Aorta (tissue), 5 donors: ENCODE measurements at regions of chr14 and their contacts with region 1.

Region 1: GRCh38 chr14:59576332-59577294 is at the start of gene CCDC175:
- DNase-seq: peak; percentile 91 to 92
- ATAC-seq: peak; percentile 88
- H3K4me3 ChIP-seq: peak within 1 kb of the TSS in 1 of 2 donors; percentile 21
- H3K27ac ChIP-seq: no peak within 1 kb of the TSS
- H3K4me1 ChIP-seq: peaks cover 0 to 2% of the 10 kb centered on the region in 2 donors
- H3K27me3 ChIP-seq: no peaks in the 10 kb centered on the region
- total RNA-seq, gene CCDC175: 0.71 to 1.1 TPM

Region 2: DNA sequence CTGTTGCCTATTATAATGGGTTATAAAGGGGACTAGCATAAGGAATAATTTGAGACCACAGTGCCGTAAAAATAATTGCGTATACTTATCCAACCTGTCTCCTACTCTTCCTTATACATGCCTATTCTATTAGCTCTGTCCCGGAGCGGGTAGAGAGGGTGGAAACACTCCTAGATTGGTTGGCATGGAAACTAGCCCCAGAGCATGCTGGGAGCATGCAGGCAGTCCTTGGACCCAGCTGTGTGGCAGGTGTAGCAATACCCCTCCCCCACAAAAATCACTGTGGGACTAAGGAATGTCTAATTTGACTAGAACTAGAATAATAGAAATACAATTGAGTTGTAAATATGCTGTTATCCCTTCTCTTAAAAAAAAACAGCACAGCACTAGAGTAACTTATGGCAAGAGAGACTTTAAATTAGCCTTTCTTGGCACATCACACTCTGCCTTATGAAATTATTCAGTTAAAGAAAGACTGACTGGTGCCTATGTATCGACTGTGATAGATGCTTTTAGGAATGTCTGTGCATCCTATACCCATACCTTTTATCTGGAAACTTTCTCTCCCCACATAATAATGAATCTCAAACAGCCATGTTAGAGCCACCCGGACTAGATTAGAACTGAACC is 632.2 kb before region 1 on chr14:
- intact Hi-C with region 1: no loop called
- DNase-seq: no peak
- ATAC-seq: no peak
- H3K4me3 ChIP-seq: no peak overlapping the region
- H3K27ac ChIP-seq: no peak overlapping the region
- H3K4me1 ChIP-seq: no peaks in the 10 kb centered on the region
- H3K27me3 ChIP-seq: peaks cover 0 to 2% of the 10 kb centered on the region in 2 donors

Region 3: DNA sequence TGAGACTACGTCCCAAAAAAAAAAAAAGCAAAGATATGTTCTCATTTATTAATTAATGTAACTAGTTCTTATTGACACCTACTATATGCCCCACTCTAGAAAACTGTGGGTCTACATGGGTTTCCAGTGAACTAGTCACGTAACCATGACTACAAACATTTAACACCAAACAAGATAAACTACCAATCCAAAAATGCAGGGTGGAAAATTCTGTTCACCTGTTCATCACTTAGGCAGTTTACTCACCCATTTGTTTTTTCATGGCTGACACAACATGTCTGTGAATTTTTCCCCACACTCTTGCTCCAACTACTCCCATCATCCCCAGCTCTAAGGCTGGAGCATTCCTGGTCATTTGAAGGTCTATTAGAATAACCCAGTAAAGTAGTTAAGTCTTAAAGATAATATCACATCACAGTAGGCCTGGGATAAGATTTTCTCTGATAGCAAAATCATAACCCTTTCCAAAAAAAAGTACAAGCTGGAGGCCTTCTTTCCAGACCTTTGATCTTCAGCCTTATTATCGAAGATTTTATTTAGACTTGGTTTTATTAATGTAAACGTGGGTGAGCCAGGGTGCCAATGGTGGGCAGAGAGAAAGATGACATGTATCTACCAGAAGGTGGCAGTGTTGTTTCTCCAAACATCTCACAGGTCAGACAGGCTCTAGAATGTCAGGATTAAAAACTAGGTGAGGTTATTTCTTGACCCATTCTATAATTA is 449.7 kb before region 1 on chr14:
- intact Hi-C with region 1: loop called in 1 of 2 experiments (anchors 10 kb)
- DNase-seq: no peak
- ATAC-seq: peak; percentile 85
- H3K4me3 ChIP-seq: no peak overlapping the region
- H3K27ac ChIP-seq: no peak overlapping the region
- H3K4me1 ChIP-seq: no peaks in the 10 kb centered on the region
- H3K27me3 ChIP-seq: no peaks in the 10 kb centered on the region

Region 4: DNA sequence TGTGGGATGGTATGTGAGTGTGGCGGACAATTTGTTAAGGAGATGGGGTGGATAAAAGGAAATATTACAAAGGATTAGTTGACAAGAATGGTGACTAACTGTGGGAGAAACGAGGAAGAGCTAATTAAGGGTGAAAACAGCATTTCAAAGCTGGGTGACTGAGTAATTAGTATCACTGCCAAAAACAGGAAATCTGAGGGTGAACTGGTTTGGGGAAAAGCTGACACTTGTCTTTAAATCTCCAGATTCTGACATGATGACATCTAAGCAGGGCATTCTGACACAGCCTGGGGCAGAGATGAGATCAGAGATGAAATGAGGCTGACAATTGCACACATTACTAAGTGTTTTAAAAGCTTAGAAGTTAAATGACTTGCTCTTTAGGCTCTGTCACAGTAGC is 42.4 kb after region 1 on chr14:
- intact Hi-C with region 1: no loop called
- DNase-seq: no peak
- ATAC-seq: no peak
- H3K4me3 ChIP-seq: no peak overlapping the region
- H3K27ac ChIP-seq: no peak overlapping the region
- H3K4me1 ChIP-seq: no peaks in the 10 kb centered on the region
- H3K27me3 ChIP-seq: no peaks in the 10 kb centered on the region

Region 5: DNA sequence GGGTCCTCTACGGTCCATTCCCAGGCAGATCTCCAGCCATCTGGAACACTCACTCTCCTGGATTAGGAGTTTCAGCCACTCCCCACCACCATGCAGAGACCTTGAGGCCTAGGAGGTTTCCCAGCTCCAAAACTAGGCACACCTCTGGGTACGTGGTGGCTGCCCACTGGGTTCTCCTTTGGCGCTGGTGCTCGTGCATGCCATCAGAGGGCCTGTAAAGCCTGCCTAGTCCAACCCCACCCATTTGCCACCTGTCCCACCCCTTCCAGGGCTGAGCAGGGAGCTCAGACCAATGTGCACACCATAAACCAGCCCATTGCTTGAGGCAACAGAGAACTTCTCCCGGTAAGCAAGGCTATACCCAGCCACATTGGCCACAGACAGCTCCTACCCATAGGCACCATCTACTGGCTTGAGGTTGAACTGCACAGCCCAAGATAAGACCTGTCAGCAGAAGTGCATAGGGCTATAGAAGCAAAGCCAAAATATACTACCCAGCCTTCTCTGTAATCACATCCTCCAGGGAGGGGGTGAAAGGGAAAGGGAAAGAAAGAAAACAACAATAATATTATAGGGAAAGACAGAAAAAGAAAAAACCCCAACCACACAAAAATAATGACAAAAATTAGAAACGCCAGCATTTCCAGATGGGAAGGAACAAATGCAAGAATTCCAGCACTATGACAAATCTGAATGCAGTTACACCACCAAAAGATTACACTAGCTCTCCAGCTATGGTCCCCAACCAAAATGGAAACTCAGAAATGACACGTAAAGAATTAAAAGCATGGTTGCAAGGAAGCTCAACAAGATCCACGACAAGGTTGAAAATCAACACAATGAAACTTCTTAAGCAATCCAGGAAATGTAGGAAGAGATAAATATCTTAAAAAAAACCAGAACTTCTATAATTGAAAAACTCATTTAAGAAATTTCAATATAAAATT is 111.9 kb after region 1 on chr14:
- intact Hi-C with region 1: loop called in 1 of 2 experiments (anchors 5 kb)
- DNase-seq: peak in 1 of 2 donors; percentile 75
- ATAC-seq: peak; percentile 75
- H3K4me3 ChIP-seq: no peak overlapping the region
- H3K27ac ChIP-seq: no peak overlapping the region
- H3K4me1 ChIP-seq: no peaks in the 10 kb centered on the region
- H3K27me3 ChIP-seq: no peaks in the 10 kb centered on the region

Region 6: GRCh38 chr14:60133487-60133886 is 556.9 kb after region 1 on chr14:
- intact Hi-C with region 1: no loop called
- DNase-seq: no peak
- ATAC-seq: no peak
- H3K4me3 ChIP-seq: no peak overlapping the region
- H3K27ac ChIP-seq: no peak overlapping the region
- H3K4me1 ChIP-seq: no peaks in the 10 kb centered on the region
- H3K27me3 ChIP-seq: no peaks in the 10 kb centered on the region